ENCODE measurements at regions of chr11 and their contacts with region 1.

Region 1: GRCh38 chr11:727859-728748 is 19.2 kb upstream of the TALDO1 start:
- DNase-seq: peak; percentile 94 to 95 (median 94)
- ATAC-seq: peak; percentile 88
- H3K4me3 ChIP-seq: no peak overlapping the region
- H3K27ac ChIP-seq: peak overlapping the region; percentile 51
- H3K4me1 ChIP-seq: peaks cover 35 to 63% of the 10 kb centered on the region in 2 experiments
- H3K27me3 ChIP-seq: no peaks in the 10 kb centered on the region
- CTCF ChIP-seq: peak; percentile 99 to 100 (median 100)
- EP300 ChIP-seq: no peak
- POLR2A ChIP-seq: no peak
- RAD21 ChIP-seq: peak; percentile 94 to 96

Region 2: DNA sequence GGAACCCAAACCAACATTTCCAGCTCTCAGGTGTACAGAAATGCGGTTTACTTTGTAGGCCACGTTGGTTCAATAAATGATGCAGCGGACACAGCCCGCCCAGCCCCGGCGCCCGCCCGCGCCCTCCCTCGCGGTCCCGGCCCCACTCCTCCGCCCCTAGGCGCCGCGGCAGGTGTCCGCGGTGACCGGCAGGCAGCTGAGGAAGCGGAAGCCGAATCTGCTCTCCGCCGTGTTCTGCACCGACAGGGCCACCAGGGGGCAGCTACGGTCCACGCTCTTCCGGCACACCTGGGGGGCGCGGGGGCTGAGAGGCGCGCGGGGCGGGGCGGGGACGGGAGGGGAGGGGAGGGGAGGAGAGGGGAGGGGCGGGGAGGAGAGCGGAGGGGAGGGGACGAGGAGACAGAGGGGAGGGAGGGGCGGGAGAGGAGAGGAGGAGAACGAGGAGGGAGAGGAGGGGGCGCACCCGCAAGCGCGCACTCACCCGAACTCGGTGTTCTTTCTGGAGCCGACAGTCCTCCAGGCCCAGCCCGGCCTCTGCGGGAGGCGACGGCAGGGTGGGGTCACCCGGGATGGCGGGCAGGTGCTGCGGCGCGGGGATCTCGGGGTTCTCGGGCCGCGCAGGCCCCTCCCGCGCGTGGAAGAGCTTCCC is 173.2 kb before region 1 on chr11:
- CTCF ChIA-PET with region 1: interaction called, 12 read pairs
- POLR2A ChIA-PET with region 1: no interaction called
- in situ Hi-C with region 1: no loop called
- intact Hi-C with region 1: loop called (anchors 5 kb)
- DNase-seq: peak; percentile 79 to 90 (median 82)
- ATAC-seq: peak; percentile 81
- H3K4me3 ChIP-seq: peak overlapping the region; percentile 27
- H3K27ac ChIP-seq: peak overlapping the region; percentile 56
- H3K4me1 ChIP-seq: peaks cover 23 to 99% of the 10 kb centered on the region in 2 experiments
- H3K27me3 ChIP-seq: no peaks in the 10 kb centered on the region
- CTCF ChIP-seq: peak in 2 of 3 experiments; percentile 62 to 74; a peak in 5 of 6 replicates
- EP300 ChIP-seq: no peak
- POLR2A ChIP-seq: no peak
- RAD21 ChIP-seq: peak in 1 of 2 experiments; percentile 49; a peak in 2 of 4 replicates

Region 3: GRCh38 chr11:662689-663274 is 65.3 kb before region 1 on chr11:
- CTCF ChIA-PET with region 1: interaction called, 22 read pairs
- POLR2A ChIA-PET with region 1: interaction called, 5 read pairs
- in situ Hi-C with region 1: no loop called
- intact Hi-C with region 1: loop called (anchors 2 kb)
- DNase-seq: peak; percentile 53 to 72 (median 67)
- ATAC-seq: peak; percentile 72
- H3K4me3 ChIP-seq: no peak overlapping the region
- H3K27ac ChIP-seq: no peak overlapping the region
- H3K4me1 ChIP-seq: peaks cover 16 to 34% of the 10 kb centered on the region in 2 experiments; a peak in 4 of 5 replicates
- H3K27me3 ChIP-seq: no peaks in the 10 kb centered on the region
- CTCF ChIP-seq: peak; percentile 78 to 79 (median 78)
- EP300 ChIP-seq: no peak
- POLR2A ChIP-seq: no peak
- RAD21 ChIP-seq: peak; percentile 49 to 78

Region 4: GRCh38 chr11:695538-696248 is 32.4 kb before region 1 on chr11 and contains the start of gene TMEM80:
- CTCF ChIA-PET with region 1: interaction called, 10 read pairs
- POLR2A ChIA-PET with region 1: interaction called, 25 read pairs
- in situ Hi-C with region 1: no loop called
- intact Hi-C with region 1: loop called (anchors 2 kb)
- DNase-seq: peak; percentile 69 to 98 (median 82)
- ATAC-seq: peak; percentile 88
- H3K4me3 ChIP-seq: peak within 1 kb of the TSS; percentile 98
- H3K27ac ChIP-seq: peak within 1 kb of the TSS; percentile 96
- H3K4me1 ChIP-seq: peaks cover 37 to 67% of the 10 kb centered on the region in 2 experiments
- H3K27me3 ChIP-seq: no peaks in the 10 kb centered on the region
- CTCF ChIP-seq: no peak
- EP300 ChIP-seq: no peak
- POLR2A ChIP-seq: peak; percentile 89
- RAD21 ChIP-seq: no peak
- polyA plus RNA-seq, gene TMEM80: 5.1 to 6.3 TPM

Region 5: DNA sequence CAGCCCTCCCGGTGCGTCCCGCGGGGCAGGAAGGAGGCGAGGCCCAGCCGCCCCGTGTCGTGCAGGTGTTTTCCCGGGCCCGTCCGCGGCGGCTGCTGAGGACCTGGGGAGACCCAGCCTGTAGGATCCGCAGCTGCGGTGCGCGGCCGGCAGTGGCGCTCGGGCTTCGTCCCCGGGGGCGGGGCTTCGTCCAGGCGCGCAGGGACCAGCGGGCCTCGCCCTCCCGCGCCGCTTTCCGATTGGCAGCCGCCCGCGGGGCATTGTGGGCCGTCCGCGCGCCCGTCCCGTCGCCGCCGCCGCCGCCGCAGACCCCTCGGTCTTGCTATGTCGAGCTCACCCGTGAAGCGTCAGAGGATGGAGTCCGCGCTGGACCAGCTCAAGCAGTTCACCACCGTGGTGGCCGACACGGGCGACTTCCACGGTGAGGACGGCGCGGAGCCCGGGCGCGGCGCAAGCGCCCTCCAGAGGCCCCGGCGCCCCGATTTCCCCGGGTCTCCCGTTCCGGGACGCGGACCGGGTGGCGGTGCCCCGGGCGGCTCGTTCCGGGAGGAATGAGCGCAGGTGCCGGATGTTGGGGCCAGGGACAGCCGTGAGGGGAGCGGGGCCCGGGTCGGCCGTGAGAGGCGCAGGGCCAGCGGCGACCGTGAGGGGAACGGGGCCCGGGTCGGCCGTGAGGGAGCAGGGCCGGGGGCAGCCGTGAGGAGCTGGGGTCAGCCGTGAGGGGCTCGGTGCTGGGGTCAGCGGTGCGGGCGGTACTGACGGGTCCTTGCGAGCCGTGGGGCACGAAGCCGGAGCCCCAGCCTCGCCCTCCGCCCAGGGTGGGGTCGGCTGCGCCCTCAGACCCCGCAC is 19.3 kb after region 1 on chr11 and contains the start of gene TALDO1:
- CTCF ChIA-PET with region 1: interaction called, 3 read pairs
- POLR2A ChIA-PET with region 1: interaction called, 14 read pairs
- in situ Hi-C with region 1: no loop called
- intact Hi-C with region 1: no loop called
- DNase-seq: peak; percentile 92 to 96 (median 93)
- ATAC-seq: peak; percentile 94
- H3K4me3 ChIP-seq: peak within 1 kb of the TSS; percentile 100
- H3K27ac ChIP-seq: peak within 1 kb of the TSS; percentile 99
- H3K4me1 ChIP-seq: peaks cover 27 to 54% of the 10 kb centered on the region in 2 experiments
- H3K27me3 ChIP-seq: no peaks in the 10 kb centered on the region
- CTCF ChIP-seq: peak in 2 of 3 experiments; percentile 21 to 32; a peak in 3 of 6 replicates
- EP300 ChIP-seq: 0 out of 2 replicates have a peak, but pooled peaks have one; percentile 3
- POLR2A ChIP-seq: peak; percentile 88
- RAD21 ChIP-seq: no peak
- polyA plus RNA-seq, gene TALDO1: 328 to 492 TPM

Region 6: GRCh38 chr11:798093-798713 is 70.1 kb after region 1 on chr11 and contains the start of gene SLC25A22:
- CTCF ChIA-PET with region 1: interaction called, 10 read pairs
- POLR2A ChIA-PET with region 1: no interaction called
- in situ Hi-C with region 1: no loop called
- intact Hi-C with region 1: loop called (anchors 5 kb)
- DNase-seq: peak; percentile 84 to 92 (median 86)
- ATAC-seq: peak; percentile 84
- H3K4me3 ChIP-seq: peak within 1 kb of the TSS; percentile 73
- H3K27ac ChIP-seq: peak within 1 kb of the TSS; percentile 71
- H3K4me1 ChIP-seq: peaks cover 7 to 97% of the 10 kb centered on the region in 2 experiments
- H3K27me3 ChIP-seq: no peaks in the 10 kb centered on the region
- CTCF ChIP-seq: peak; percentile 69 to 94 (median 83)
- EP300 ChIP-seq: no peak
- POLR2A ChIP-seq: no peak
- RAD21 ChIP-seq: peak; percentile 48 to 61
- polyA plus RNA-seq, gene SLC25A22: 0.41 to 0.44 TPM

Region 7: GRCh38 chr11:877565-877964 is 149.5 kb after region 1 on chr11:
- CTCF ChIA-PET with region 1: no interaction called
- POLR2A ChIA-PET with region 1: no interaction called
- in situ Hi-C with region 1: no loop called
- intact Hi-C with region 1: no loop called
- DNase-seq: peak; percentile 74 to 91 (median 78)
- ATAC-seq: peak; percentile 91
- H3K4me3 ChIP-seq: no peak overlapping the region
- H3K27ac ChIP-seq: 0 out of 3 replicates have a peak overlapping the region, but pooled peaks have one; percentile 41
- H3K4me1 ChIP-seq: peaks cover 29 to 56% of the 10 kb centered on the region in 2 experiments; a peak in 4 of 5 replicates
- H3K27me3 ChIP-seq: no peaks in the 10 kb centered on the region
- CTCF ChIP-seq: no peak
- EP300 ChIP-seq: no peak
- POLR2A ChIP-seq: no peak
- RAD21 ChIP-seq: no peak